ENCODE measurements at regions of chr21 and their contacts with region 1.

Region 1: GRCh38 chr21:42193131-42193671 is 25.7 kb upstream of the ABCG1 start:
- DNase-seq: peak; percentile 94
- ATAC-seq: peak; percentile 40
- H3K4me3 Mint-ChIP-seq: no peak overlapping the region
- H3K27ac Mint-ChIP-seq: peak overlapping the region; percentile 58
- H3K4me1 Mint-ChIP-seq: peaks cover 71% of the 10 kb centered on the region
- H3K27me3 Mint-ChIP-seq: peaks cover 25% of the 10 kb centered on the region

Region 2: DNA sequence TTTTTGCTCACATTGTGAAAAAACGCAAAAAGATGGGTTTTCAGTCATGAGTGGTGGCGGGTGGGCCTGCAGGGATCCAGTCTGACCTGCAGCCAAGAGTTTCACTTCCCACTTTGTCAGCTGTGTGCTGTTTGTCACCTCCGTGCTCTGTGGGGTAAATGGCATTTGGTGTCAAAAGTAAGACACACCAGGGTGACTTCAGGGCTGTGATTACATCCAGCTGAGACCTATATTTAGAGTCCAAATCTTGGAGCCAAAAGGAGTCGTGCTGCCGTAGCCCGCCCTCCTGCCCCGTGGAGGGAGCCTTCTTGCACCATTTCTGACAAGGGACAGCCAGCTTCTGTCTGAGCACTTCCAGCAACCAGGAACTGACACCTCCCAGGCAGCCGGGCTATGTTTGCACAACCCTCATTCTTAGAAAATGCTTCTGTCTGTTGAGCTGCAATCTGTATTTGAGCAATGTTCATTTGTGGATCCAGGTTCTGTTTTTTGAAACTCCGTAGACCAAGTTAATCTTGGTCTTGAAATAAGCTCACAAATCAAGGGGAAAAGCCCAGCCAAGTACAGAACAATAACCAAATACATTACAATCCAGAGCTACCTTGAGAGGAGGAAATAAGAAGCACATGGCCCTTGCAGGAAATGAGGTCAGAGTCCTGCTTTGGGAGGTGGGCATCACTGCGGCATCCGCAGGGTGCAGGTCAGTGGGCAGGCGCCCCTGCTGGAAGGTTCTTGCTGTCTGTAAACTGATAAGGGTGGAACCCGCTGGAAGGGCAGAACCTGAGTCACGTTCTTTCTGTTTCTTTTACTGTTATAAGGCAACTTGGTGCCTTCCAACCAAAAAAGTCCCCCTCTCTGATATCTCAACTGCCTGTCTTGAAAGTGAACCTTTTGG is 40.1 kb after region 1 on chr21:
- CTCF ChIA-PET with region 1: interaction called, 25 read pairs
- DNase-seq: peak; percentile 90
- ATAC-seq: peak; percentile 56
- H3K4me3 Mint-ChIP-seq: peak overlapping the region; percentile 23
- H3K27ac Mint-ChIP-seq: peak overlapping the region; percentile 89
- H3K4me1 Mint-ChIP-seq: peaks cover 88% of the 10 kb centered on the region
- H3K27me3 Mint-ChIP-seq: no peaks in the 10 kb centered on the region

Region 3: GRCh38 chr21:42238185-42238934 is 45.2 kb after region 1 on chr21:
- CTCF ChIA-PET with region 1: interaction called, 25 read pairs
- DNase-seq: peak; percentile 74
- ATAC-seq: peak; percentile 22
- H3K4me3 Mint-ChIP-seq: peak overlapping the region; percentile 47
- H3K27ac Mint-ChIP-seq: peak overlapping the region; percentile 86
- H3K4me1 Mint-ChIP-seq: peaks cover 59% of the 10 kb centered on the region
- H3K27me3 Mint-ChIP-seq: no peaks in the 10 kb centered on the region

Region 4: GRCh38 chr21:42289926-42290325 is 96.7 kb after region 1 on chr21:
- CTCF ChIA-PET with region 1: no interaction called
- DNase-seq: no peak
- ATAC-seq: no peak
- H3K4me3 Mint-ChIP-seq: no peak overlapping the region
- H3K27ac Mint-ChIP-seq: no peak overlapping the region
- H3K4me1 Mint-ChIP-seq: peaks cover 24% of the 10 kb centered on the region
- H3K27me3 Mint-ChIP-seq: no peaks in the 10 kb centered on the region

Measured in activated CD8-positive, alpha-beta memory T cell treated with anti-CD3 and anti-CD28 coated beads, Interleukin-2, amount 10 ng/mL, durations not matched to agents 7 days and 5 days (primary cell).